ENCODE measurements at regions of chr7 and their contacts with region 1.

Region 1: GRCh38 chr7:105013221-105013815 is 687 bp upstream of the KMT2E start:
- DNase-seq: peak; percentile 90 to 98 (median 96)
- ATAC-seq: peak; percentile 59
- H3K4me3 ChIP-seq: peak overlapping the region; percentile 84
- H3K4me3 Mint-ChIP-seq: peak overlapping the region; percentile 97
- H3K27ac ChIP-seq: peak overlapping the region; percentile 100
- H3K27ac Mint-ChIP-seq: peak overlapping the region; percentile 100
- H3K4me1 ChIP-seq: peaks cover 13% of the 10 kb centered on the region
- H3K4me1 Mint-ChIP-seq: peaks cover 50% of the 10 kb centered on the region
- H3K27me3 ChIP-seq: no peaks in the 10 kb centered on the region
- H3K27me3 Mint-ChIP-seq: peaks cover 13% of the 10 kb centered on the region
- CTCF ChIP-seq: no peak

Region 2: DNA sequence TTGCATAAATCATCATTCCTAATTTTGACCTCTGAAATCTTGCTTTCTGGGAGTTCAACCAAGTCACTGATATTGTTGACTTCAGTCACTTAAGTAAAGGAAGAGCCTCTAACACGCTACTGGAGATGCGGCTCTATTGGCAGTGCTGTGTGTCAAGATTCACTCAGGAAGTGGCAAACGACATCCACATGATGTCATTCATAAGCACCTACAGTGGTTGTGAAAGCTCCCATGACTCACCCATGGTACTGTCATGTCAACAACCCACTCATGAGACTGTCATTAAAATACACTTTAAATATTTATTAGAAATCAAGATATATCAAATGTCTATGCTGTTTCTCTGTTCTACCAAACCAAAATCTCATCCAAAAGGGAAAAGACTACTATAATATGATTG is 737.4 kb before region 1 on chr7:
- CTCF ChIA-PET with region 1: no interaction called
- POLR2A ChIA-PET with region 1: no interaction called
- intact Hi-C with region 1: no loop called
- DNase-seq: no peak
- ATAC-seq: no peak
- H3K4me3 ChIP-seq: no peak overlapping the region
- H3K4me3 Mint-ChIP-seq: no peak overlapping the region
- H3K27ac ChIP-seq: no peak overlapping the region
- H3K27ac Mint-ChIP-seq: no peak overlapping the region
- H3K4me1 ChIP-seq: no peaks in the 10 kb centered on the region
- H3K4me1 Mint-ChIP-seq: no peaks in the 10 kb centered on the region
- H3K27me3 ChIP-seq: no peaks in the 10 kb centered on the region
- H3K27me3 Mint-ChIP-seq: peaks cover 13% of the 10 kb centered on the region
- CTCF ChIP-seq: no peak

Region 3: GRCh38 chr7:104943502-104944343 is 69.6 kb before region 1 on chr7:
- CTCF ChIA-PET with region 1: interaction called, 5 read pairs
- POLR2A ChIA-PET with region 1: interaction called, 81 read pairs
- intact Hi-C with region 1: loop called (anchors 1 to 2 kb)
- DNase-seq: peak; percentile 33 to 87 (median 53)
- ATAC-seq: peak; percentile 34
- H3K4me3 ChIP-seq: peak overlapping the region; percentile 5
- H3K4me3 Mint-ChIP-seq: peak overlapping the region; percentile 91
- H3K27ac ChIP-seq: peak overlapping the region; percentile 97 to 98
- H3K27ac Mint-ChIP-seq: peak overlapping the region; percentile 100
- H3K4me1 ChIP-seq: peaks cover 67% of the 10 kb centered on the region
- H3K4me1 Mint-ChIP-seq: peaks cover 73% of the 10 kb centered on the region
- H3K27me3 ChIP-seq: no peaks in the 10 kb centered on the region
- H3K27me3 Mint-ChIP-seq: no peaks in the 10 kb centered on the region
- CTCF ChIP-seq: no peak

Region 4: DNA sequence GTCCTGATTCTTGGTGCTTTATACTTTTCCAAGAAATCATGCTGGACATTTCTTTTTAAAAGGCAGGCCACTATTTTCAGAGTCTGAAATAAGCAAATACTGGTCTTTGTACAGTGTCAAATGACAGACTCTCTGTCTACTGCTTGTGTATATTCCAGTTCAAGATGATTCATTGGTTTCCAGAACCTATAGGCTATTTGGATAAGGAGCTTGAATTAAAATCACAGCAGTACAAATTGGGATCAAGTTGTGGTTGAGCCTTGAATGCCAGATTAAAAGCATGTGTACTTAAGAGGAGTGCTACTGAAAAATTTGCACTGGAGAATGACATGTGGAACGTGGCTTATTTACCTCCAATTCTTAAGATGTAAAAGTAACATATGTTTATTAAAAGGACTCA is 11.4 kb after region 1 on chr7:
- CTCF ChIA-PET with region 1: interaction called, 4 read pairs
- POLR2A ChIA-PET with region 1: interaction called, 72 read pairs
- intact Hi-C with region 1: no loop called
- DNase-seq: no peak
- ATAC-seq: no peak
- H3K4me3 ChIP-seq: no peak overlapping the region
- H3K4me3 Mint-ChIP-seq: peak overlapping the region; percentile 68
- H3K27ac ChIP-seq: no peak overlapping the region
- H3K27ac Mint-ChIP-seq: no peak overlapping the region
- H3K4me1 ChIP-seq: peaks cover 38% of the 10 kb centered on the region
- H3K4me1 Mint-ChIP-seq: peaks cover 95% of the 10 kb centered on the region
- H3K27me3 ChIP-seq: no peaks in the 10 kb centered on the region
- H3K27me3 Mint-ChIP-seq: no peaks in the 10 kb centered on the region
- CTCF ChIP-seq: no peak

Region 5: GRCh38 chr7:105046414-105046813 is 33.1 kb after region 1 on chr7:
- CTCF ChIA-PET with region 1: interaction called, 3 read pairs
- POLR2A ChIA-PET with region 1: interaction called, 20 read pairs
- intact Hi-C with region 1: loop called in 1 of 2 experiments (anchors 5 kb)
- DNase-seq: no peak
- ATAC-seq: no peak
- H3K4me3 ChIP-seq: no peak overlapping the region
- H3K4me3 Mint-ChIP-seq: peak overlapping the region; percentile 20
- H3K27ac ChIP-seq: no peak overlapping the region
- H3K27ac Mint-ChIP-seq: no peak overlapping the region
- H3K4me1 ChIP-seq: peaks cover 20% of the 10 kb centered on the region
- H3K4me1 Mint-ChIP-seq: peaks cover 65% of the 10 kb centered on the region
- H3K27me3 ChIP-seq: no peaks in the 10 kb centered on the region
- H3K27me3 Mint-ChIP-seq: no peaks in the 10 kb centered on the region
- CTCF ChIP-seq: no peak

Region 6: GRCh38 chr7:105352018-105352612 is 338.8 kb after region 1 on chr7:
- CTCF ChIA-PET with region 1: no interaction called
- POLR2A ChIA-PET with region 1: interaction called, 20 read pairs
- intact Hi-C with region 1: no loop called
- DNase-seq: peak; percentile 15 to 93 (median 48)
- ATAC-seq: peak; percentile 97
- H3K4me3 ChIP-seq: peak overlapping the region; percentile 23
- H3K4me3 Mint-ChIP-seq: peak overlapping the region; percentile 87
- H3K27ac ChIP-seq: peak overlapping the region; percentile 14 to 19
- H3K27ac Mint-ChIP-seq: peak overlapping the region; percentile 89
- H3K4me1 ChIP-seq: peaks cover 85% of the 10 kb centered on the region
- H3K4me1 Mint-ChIP-seq: peaks cover 77% of the 10 kb centered on the region
- H3K27me3 ChIP-seq: no peaks in the 10 kb centered on the region
- H3K27me3 Mint-ChIP-seq: no peaks in the 10 kb centered on the region
- CTCF ChIP-seq: no peak

Region 7: GRCh38 chr7:106285051-106285854 is 1271.9 kb after region 1 on chr7:
- CTCF ChIA-PET with region 1: no interaction called
- POLR2A ChIA-PET with region 1: interaction called, 8 read pairs
- intact Hi-C with region 1: loop called in 1 of 2 experiments (anchors 10 kb)
- DNase-seq: peak; percentile 92 to 100 (median 97)
- ATAC-seq: peak; percentile 88
- H3K4me3 ChIP-seq: peak overlapping the region; percentile 75
- H3K4me3 Mint-ChIP-seq: peak overlapping the region; percentile 99
- H3K27ac ChIP-seq: peak overlapping the region; percentile 84 to 91
- H3K27ac Mint-ChIP-seq: peak overlapping the region; percentile 94
- H3K4me1 ChIP-seq: peaks cover 9% of the 10 kb centered on the region
- H3K4me1 Mint-ChIP-seq: peaks cover 37% of the 10 kb centered on the region
- H3K27me3 ChIP-seq: no peaks in the 10 kb centered on the region
- H3K27me3 Mint-ChIP-seq: no peaks in the 10 kb centered on the region
- CTCF ChIP-seq: no peak